CD4-positive, alpha-beta T cell (primary cell): ENCODE measurements at regions of chr12 and their contacts with region 1.

Region 1: GRCh38 chr12:46675736-46676135 is 150.1 kb downstream of the SLC38A4 start:
- DNase-seq: peak in 3 of 14 experiments; percentile 28 to 40 (median 36)
- ATAC-seq: no peak
- H3K4me3 ChIP-seq: no peak overlapping the region
- H3K4me3 Mint-ChIP-seq: no peak overlapping the region
- H3K27ac ChIP-seq: no peak overlapping the region
- H3K27ac Mint-ChIP-seq: no peak overlapping the region
- H3K4me1 ChIP-seq: no peaks in the 10 kb centered on the region
- H3K4me1 Mint-ChIP-seq: no peaks in the 10 kb centered on the region
- H3K27me3 ChIP-seq: no peaks in the 10 kb centered on the region
- H3K27me3 Mint-ChIP-seq: no peaks in the 10 kb centered on the region
- CTCF ChIP-seq: peak; percentile 59

Region 2: DNA sequence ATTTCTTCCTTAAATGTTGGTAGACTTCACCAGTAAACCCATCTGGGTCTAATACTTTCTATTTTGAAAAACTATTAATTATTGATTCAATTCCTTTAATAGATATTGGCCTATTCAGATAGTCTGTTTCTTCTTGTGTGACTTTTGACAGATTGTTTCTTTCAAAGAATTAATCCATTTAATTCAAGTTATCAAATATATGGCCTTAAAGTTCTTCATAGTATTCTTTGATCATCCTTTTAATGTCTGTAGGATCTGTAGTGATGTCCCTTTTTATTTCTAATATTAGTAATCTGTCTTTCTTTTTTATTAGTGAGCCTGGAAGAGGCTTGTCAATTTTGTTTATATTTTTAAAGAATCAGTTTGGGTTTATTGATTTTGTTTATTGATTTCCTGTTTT is 39.9 kb before region 1 on chr12:
- CTCF ChIA-PET with region 1: no interaction called
- POLR2A ChIA-PET with region 1: no interaction called
- intact Hi-C with region 1: no loop called
- DNase-seq: no peak
- ATAC-seq: no peak
- H3K4me3 ChIP-seq: no peak overlapping the region
- H3K4me3 Mint-ChIP-seq: no peak overlapping the region
- H3K27ac ChIP-seq: no peak overlapping the region
- H3K27ac Mint-ChIP-seq: no peak overlapping the region
- H3K4me1 ChIP-seq: no peaks in the 10 kb centered on the region
- H3K4me1 Mint-ChIP-seq: no peaks in the 10 kb centered on the region
- H3K27me3 ChIP-seq: no peaks in the 10 kb centered on the region
- H3K27me3 Mint-ChIP-seq: no peaks in the 10 kb centered on the region
- CTCF ChIP-seq: no peak

Region 3: DNA sequence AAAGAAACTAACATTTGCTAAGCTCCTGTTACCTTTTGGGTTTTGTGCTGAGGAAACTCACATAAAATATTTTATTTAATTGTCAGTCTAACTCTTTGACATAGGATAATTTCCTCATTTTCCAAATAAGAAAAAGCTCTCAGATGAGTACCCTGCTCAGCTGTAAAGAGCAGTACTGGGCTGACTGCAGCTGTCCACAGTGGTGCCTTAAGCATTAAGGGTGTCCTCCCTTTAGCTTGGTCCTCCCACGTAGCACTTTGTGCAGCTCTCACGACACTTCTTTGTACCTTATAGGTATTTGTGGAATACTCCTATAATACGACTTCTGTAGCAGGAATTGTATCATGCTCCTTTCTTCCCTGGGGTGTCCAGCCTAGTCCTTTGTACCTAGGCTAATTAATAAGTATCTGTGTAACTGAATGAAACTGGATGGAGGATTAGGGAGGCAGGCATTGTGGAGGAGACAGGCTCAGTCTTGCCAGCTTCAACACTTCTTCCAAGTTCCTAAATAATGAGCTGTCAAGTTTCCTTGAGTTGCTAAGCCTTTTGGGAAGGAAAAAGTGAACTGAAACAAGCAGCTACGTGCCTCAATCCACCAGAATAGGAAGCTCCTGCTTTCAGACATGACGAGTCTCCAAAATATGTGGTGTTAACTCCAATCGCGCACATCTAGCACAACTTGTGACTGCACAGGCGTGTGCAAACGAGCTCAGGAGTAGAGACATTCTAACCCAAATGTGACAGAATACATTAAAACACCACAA is 27.0 kb after region 1 on chr12:
- CTCF ChIA-PET with region 1: no interaction called
- POLR2A ChIA-PET with region 1: no interaction called
- intact Hi-C with region 1: no loop called
- DNase-seq: no peak
- ATAC-seq: no peak
- H3K4me3 ChIP-seq: no peak overlapping the region
- H3K4me3 Mint-ChIP-seq: no peak overlapping the region
- H3K27ac ChIP-seq: no peak overlapping the region
- H3K27ac Mint-ChIP-seq: no peak overlapping the region
- H3K4me1 ChIP-seq: no peaks in the 10 kb centered on the region
- H3K4me1 Mint-ChIP-seq: no peaks in the 10 kb centered on the region
- H3K27me3 ChIP-seq: no peaks in the 10 kb centered on the region
- H3K27me3 Mint-ChIP-seq: no peaks in the 10 kb centered on the region
- CTCF ChIP-seq: no peak

Region 4: GRCh38 chr12:46794593-46795190 is 119.0 kb after region 1 on chr12:
- CTCF ChIA-PET with region 1: no interaction called
- POLR2A ChIA-PET with region 1: no interaction called
- intact Hi-C with region 1: no loop called
- DNase-seq: no peak
- ATAC-seq: no peak
- H3K4me3 ChIP-seq: no peak overlapping the region
- H3K4me3 Mint-ChIP-seq: no peak overlapping the region
- H3K27ac ChIP-seq: no peak overlapping the region
- H3K27ac Mint-ChIP-seq: no peak overlapping the region
- H3K4me1 ChIP-seq: no peaks in the 10 kb centered on the region
- H3K4me1 Mint-ChIP-seq: no peaks in the 10 kb centered on the region
- H3K27me3 ChIP-seq: peaks cover 0 to 3% of the 10 kb centered on the region in 2 experiments
- H3K27me3 Mint-ChIP-seq: no peaks in the 10 kb centered on the region
- CTCF ChIP-seq: no peak

Region 5: DNA sequence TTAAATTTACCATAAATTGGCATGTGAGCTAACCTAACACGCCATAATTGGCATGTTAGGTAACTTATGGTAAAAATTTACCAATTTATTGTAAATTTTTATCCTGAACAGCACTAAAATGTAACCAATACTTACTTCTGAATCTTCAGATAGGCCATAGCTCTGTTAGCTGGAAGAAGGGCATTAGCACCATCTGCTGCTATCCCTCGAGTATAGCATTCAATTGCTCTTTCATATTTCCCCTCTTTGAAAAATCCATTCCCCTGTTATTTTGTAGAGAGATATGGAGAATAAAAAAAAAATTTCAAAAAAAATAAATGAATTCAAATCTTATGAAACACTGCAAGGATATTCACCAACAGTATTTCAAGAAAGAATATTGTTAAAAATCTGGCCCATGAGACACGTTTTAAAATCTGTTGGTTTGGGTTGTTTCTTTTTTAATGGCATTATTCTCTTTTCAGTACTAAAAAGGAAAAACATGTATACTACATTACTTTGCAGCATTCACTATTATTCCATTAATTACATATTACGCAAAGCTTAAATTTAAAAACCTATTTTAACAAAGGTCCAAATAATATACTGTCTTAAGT is 1011.0 kb after region 1 on chr12:
- CTCF ChIA-PET with region 1: no interaction called
- POLR2A ChIA-PET with region 1: no interaction called
- intact Hi-C with region 1: loop called in 1 of 2 experiments (anchors 10 kb)
- DNase-seq: peak in 6 of 14 experiments; percentile 1 to 61 (median 31)
- ATAC-seq: peak; percentile 76
- H3K4me3 ChIP-seq: no peak overlapping the region
- H3K4me3 Mint-ChIP-seq: no peak overlapping the region
- H3K27ac ChIP-seq: no peak overlapping the region
- H3K27ac Mint-ChIP-seq: no peak overlapping the region
- H3K4me1 ChIP-seq: no peaks in the 10 kb centered on the region
- H3K4me1 Mint-ChIP-seq: peaks cover 10% of the 10 kb centered on the region
- H3K27me3 ChIP-seq: no peaks in the 10 kb centered on the region
- H3K27me3 Mint-ChIP-seq: no peaks in the 10 kb centered on the region
- CTCF ChIP-seq: peak; percentile 58